ENCODE measurements at regions of chr21 and their contacts with region 1.

Region 1: GRCh38 chr21:34888569-34889319 is 160.4 kb downstream of the RUNX1 start:
- DNase-seq: peak; percentile 66 to 84
- ATAC-seq: peak; percentile 46 to 69 (median 50)
- H3K4me3 ChIP-seq: peak overlapping the region; percentile 77
- H3K4me3 Mint-ChIP-seq: peak overlapping the region; percentile 96
- H3K27ac ChIP-seq: peak overlapping the region; percentile 78
- H3K27ac Mint-ChIP-seq: peak overlapping the region; percentile 98
- H3K4me1 ChIP-seq: peaks cover 45% of the 10 kb centered on the region
- H3K4me1 Mint-ChIP-seq: peaks cover 23 to 35% of the 10 kb centered on the region in 2 donors
- H3K27me3 ChIP-seq: no peaks in the 10 kb centered on the region
- H3K27me3 Mint-ChIP-seq: no peaks in the 10 kb centered on the region
- CTCF ChIP-seq: no peak

Region 2: GRCh38 chr21:34801519-34802132 is 87.1 kb before region 1 on chr21:
- intact Hi-C with region 1: loop called (anchors 1 kb)
- DNase-seq: peak in 1 of 2 donors; percentile 53
- ATAC-seq: peak; percentile 51 to 59 (median 54)
- H3K4me3 ChIP-seq: no peak overlapping the region
- H3K4me3 Mint-ChIP-seq: no peak overlapping the region
- H3K27ac ChIP-seq: no peak overlapping the region
- H3K27ac Mint-ChIP-seq: peak overlapping the region; percentile 70 to 78
- H3K4me1 ChIP-seq: peaks cover 6% of the 10 kb centered on the region
- H3K4me1 Mint-ChIP-seq: peaks cover 51 to 59% of the 10 kb centered on the region in 2 donors
- H3K27me3 ChIP-seq: no peaks in the 10 kb centered on the region
- H3K27me3 Mint-ChIP-seq: no peaks in the 10 kb centered on the region
- CTCF ChIP-seq: no peak

Region 3: GRCh38 chr21:34956416-34957316 is 67.9 kb after region 1 on chr21:
- intact Hi-C with region 1: no loop called
- DNase-seq: no peak
- ATAC-seq: peak in 1 of 3 donors; percentile 60
- H3K4me3 ChIP-seq: no peak overlapping the region
- H3K4me3 Mint-ChIP-seq: no peak overlapping the region
- H3K27ac ChIP-seq: no peak overlapping the region
- H3K27ac Mint-ChIP-seq: peak overlapping the region in 1 of 2 donors; percentile 34
- H3K4me1 ChIP-seq: peaks cover 6% of the 10 kb centered on the region
- H3K4me1 Mint-ChIP-seq: peaks cover 69 to 75% of the 10 kb centered on the region in 2 donors
- H3K27me3 ChIP-seq: no peaks in the 10 kb centered on the region
- H3K27me3 Mint-ChIP-seq: no peaks in the 10 kb centered on the region
- CTCF ChIP-seq: no peak

Region 4: GRCh38 chr21:34986561-34987500 is 98.1 kb after region 1 on chr21:
- intact Hi-C with region 1: loop called (anchors 5 kb)
- DNase-seq: peak; percentile 33 to 78
- ATAC-seq: peak; percentile 32 to 64 (median 48)
- H3K4me3 ChIP-seq: no peak overlapping the region
- H3K4me3 Mint-ChIP-seq: peak overlapping the region; percentile 88
- H3K27ac ChIP-seq: peak overlapping the region; percentile 57
- H3K27ac Mint-ChIP-seq: peak overlapping the region; percentile 82 to 91
- H3K4me1 ChIP-seq: peaks cover 79% of the 10 kb centered on the region
- H3K4me1 Mint-ChIP-seq: peaks cover 90 to 95% of the 10 kb centered on the region in 2 donors
- H3K27me3 ChIP-seq: no peaks in the 10 kb centered on the region
- H3K27me3 Mint-ChIP-seq: no peaks in the 10 kb centered on the region
- CTCF ChIP-seq: no peak

Region 5: GRCh38 chr21:35045542-35046262 is 157.0 kb after region 1 on chr21:
- intact Hi-C with region 1: loop called (anchors 1 kb)
- DNase-seq: peak; percentile 41 to 88
- ATAC-seq: peak; percentile 13 to 42 (median 23)
- H3K4me3 ChIP-seq: peak overlapping the region; percentile 56
- H3K4me3 Mint-ChIP-seq: peak overlapping the region; percentile 92
- H3K27ac ChIP-seq: peak overlapping the region; percentile 80
- H3K27ac Mint-ChIP-seq: peak overlapping the region; percentile 95 to 97
- H3K4me1 ChIP-seq: peaks cover 76% of the 10 kb centered on the region
- H3K4me1 Mint-ChIP-seq: peaks cover 100% of the 10 kb centered on the region in 2 donors
- H3K27me3 ChIP-seq: no peaks in the 10 kb centered on the region
- H3K27me3 Mint-ChIP-seq: peaks cover 0 to 5% of the 10 kb centered on the region in 2 donors
- CTCF ChIP-seq: no peak

Region 6: GRCh38 chr21:35400233-35400957 is 511.7 kb after region 1 on chr21:
- intact Hi-C with region 1: loop called (anchors 1 kb)
- DNase-seq: peak; percentile 15 to 81
- ATAC-seq: peak; percentile 64 to 83 (median 77)
- H3K4me3 ChIP-seq: no peak overlapping the region
- H3K4me3 Mint-ChIP-seq: no peak overlapping the region
- H3K27ac ChIP-seq: no peak overlapping the region
- H3K27ac Mint-ChIP-seq: no peak overlapping the region
- H3K4me1 ChIP-seq: no peaks in the 10 kb centered on the region
- H3K4me1 Mint-ChIP-seq: no peaks in the 10 kb centered on the region
- H3K27me3 ChIP-seq: no peaks in the 10 kb centered on the region
- H3K27me3 Mint-ChIP-seq: peaks cover 17 to 33% of the 10 kb centered on the region in 2 donors
- CTCF ChIP-seq: peak; percentile 62

Measured in natural killer cell (primary cell).